CD4-positive, alpha-beta memory T cell (primary cell): ENCODE measurements at regions of chr17 and their contacts with region 1.

Region 1: GRCh38 chr17:28854457-28855350 is at the start of gene ERAL1:
- DNase-seq: peak; percentile 82 to 90 (median 85)
- H3K4me3 ChIP-seq: peak within 1 kb of the TSS; percentile 88 to 91
- H3K4me3 Mint-ChIP-seq: peak within 1 kb of the TSS; percentile 90 to 98 (median 95)
- H3K27ac ChIP-seq: peak within 1 kb of the TSS; percentile 73
- H3K27ac Mint-ChIP-seq: peak within 1 kb of the TSS; percentile 82 to 96 (median 94)
- H3K4me1 ChIP-seq: peaks cover 13% of the 10 kb centered on the region
- H3K4me1 Mint-ChIP-seq: peaks cover 4 to 19% (median 11%) of the 10 kb centered on the region in 4 donors
- H3K27me3 ChIP-seq: no peaks in the 10 kb centered on the region
- H3K27me3 Mint-ChIP-seq: no peaks in the 10 kb centered on the region
- total RNA-seq, gene ERAL1: 23.5 to 24.3 TPM

Region 2: GRCh38 chr17:28384281-28385036 is 470.2 kb before region 1 on chr17:
- CTCF ChIA-PET with region 1: no interaction called
- POLR2A ChIA-PET with region 1: no interaction called
- intact Hi-C with region 1: no loop called
- DNase-seq: peak; percentile 50 to 71 (median 58)
- H3K4me3 ChIP-seq: peak overlapping the region; percentile 86 to 91
- H3K4me3 Mint-ChIP-seq: peak overlapping the region; percentile 92 to 97 (median 95)
- H3K27ac ChIP-seq: peak overlapping the region; percentile 50
- H3K27ac Mint-ChIP-seq: peak overlapping the region; percentile 59 to 94 (median 90)
- H3K4me1 ChIP-seq: peaks cover 22% of the 10 kb centered on the region
- H3K4me1 Mint-ChIP-seq: peaks cover 15 to 32% (median 29%) of the 10 kb centered on the region in 4 donors
- H3K27me3 ChIP-seq: no peaks in the 10 kb centered on the region
- H3K27me3 Mint-ChIP-seq: peaks cover 0 to 2% of the 10 kb centered on the region in 2 donors

Region 3: GRCh38 chr17:28842282-28843012 is 12.3 kb before region 1 on chr17 and contains the start of gene FAM222B:
- CTCF ChIA-PET with region 1: interaction called, 3 read pairs
- POLR2A ChIA-PET with region 1: interaction called, 12 read pairs
- intact Hi-C with region 1: no loop called
- DNase-seq: peak; percentile 85 to 87 (median 87)
- H3K4me3 ChIP-seq: peak within 1 kb of the TSS; percentile 55 to 87
- H3K4me3 Mint-ChIP-seq: peak within 1 kb of the TSS; percentile 93 to 100 (median 98)
- H3K27ac ChIP-seq: peak within 1 kb of the TSS; percentile 84
- H3K27ac Mint-ChIP-seq: peak within 1 kb of the TSS; percentile 93 to 99 (median 98)
- H3K4me1 ChIP-seq: peaks cover 25% of the 10 kb centered on the region
- H3K4me1 Mint-ChIP-seq: peaks cover 15 to 26% (median 21%) of the 10 kb centered on the region in 4 donors
- H3K27me3 ChIP-seq: no peaks in the 10 kb centered on the region
- H3K27me3 Mint-ChIP-seq: no peaks in the 10 kb centered on the region
- total RNA-seq, gene FAM222B: 19.0 to 23.0 TPM